PC-3 (cell line): ENCODE measurements at regions of chr1 and their contacts with region 1.

Region 1: GRCh38 chr1:183834568-183834967 is 29.6 kb downstream of the RGL1 start:
- DNase-seq: no peak
- ATAC-seq: no peak
- H3K4me3 ChIP-seq: no peak overlapping the region
- H3K27ac ChIP-seq: no peak overlapping the region
- H3K4me1 ChIP-seq: 0 out of 2 replicates have a peak, but pooled peaks cover under 1% of the 10 kb centered on the region
- H3K27me3 ChIP-seq: no peaks in the 10 kb centered on the region
- CTCF ChIP-seq: no peak

Region 2: DNA sequence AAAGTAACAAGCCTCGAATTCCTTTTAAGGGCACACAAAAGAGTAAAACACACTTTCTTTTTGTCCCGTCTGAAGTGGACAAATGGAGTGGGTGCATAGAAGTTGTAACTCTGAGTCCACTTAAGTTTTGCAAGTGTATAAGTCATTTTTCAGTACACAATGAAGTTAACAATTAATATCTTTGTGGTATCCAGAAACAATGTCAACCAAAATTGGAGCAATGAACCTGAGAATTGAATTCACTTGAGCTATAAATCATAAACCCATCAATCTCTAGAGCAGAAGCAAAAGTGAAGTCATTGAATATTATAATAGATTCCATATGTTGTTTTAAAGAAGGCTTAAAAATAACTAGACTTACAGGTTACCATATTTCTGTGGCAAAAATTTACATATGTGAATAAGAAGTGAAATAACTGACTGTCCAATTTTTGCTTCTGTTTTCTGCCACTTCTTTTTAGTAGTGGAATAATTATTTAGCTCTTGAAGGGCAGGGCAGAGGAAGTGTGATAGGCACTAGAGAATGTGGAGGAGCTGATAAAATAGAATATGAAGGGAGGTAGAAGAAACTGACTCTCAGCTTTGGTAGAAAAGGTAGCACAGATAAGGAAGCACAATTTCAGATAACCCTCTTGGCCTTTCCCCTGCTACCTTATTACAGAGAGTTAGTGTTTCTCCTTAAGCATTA is 103.5 kb before region 1 on chr1:
- CTCF ChIA-PET with region 1: no interaction called
- POLR2A ChIA-PET with region 1: interaction called, 20 read pairs
- intact Hi-C with region 1: no loop called
- DNase-seq: no peak
- ATAC-seq: no peak
- H3K4me3 ChIP-seq: no peak overlapping the region
- H3K27ac ChIP-seq: no peak overlapping the region
- H3K4me1 ChIP-seq: no peaks in the 10 kb centered on the region
- H3K27me3 ChIP-seq: no peaks in the 10 kb centered on the region
- CTCF ChIP-seq: no peak